ENCODE measurements at regions of chr6 and their contacts with region 1.

Region 1: DNA sequence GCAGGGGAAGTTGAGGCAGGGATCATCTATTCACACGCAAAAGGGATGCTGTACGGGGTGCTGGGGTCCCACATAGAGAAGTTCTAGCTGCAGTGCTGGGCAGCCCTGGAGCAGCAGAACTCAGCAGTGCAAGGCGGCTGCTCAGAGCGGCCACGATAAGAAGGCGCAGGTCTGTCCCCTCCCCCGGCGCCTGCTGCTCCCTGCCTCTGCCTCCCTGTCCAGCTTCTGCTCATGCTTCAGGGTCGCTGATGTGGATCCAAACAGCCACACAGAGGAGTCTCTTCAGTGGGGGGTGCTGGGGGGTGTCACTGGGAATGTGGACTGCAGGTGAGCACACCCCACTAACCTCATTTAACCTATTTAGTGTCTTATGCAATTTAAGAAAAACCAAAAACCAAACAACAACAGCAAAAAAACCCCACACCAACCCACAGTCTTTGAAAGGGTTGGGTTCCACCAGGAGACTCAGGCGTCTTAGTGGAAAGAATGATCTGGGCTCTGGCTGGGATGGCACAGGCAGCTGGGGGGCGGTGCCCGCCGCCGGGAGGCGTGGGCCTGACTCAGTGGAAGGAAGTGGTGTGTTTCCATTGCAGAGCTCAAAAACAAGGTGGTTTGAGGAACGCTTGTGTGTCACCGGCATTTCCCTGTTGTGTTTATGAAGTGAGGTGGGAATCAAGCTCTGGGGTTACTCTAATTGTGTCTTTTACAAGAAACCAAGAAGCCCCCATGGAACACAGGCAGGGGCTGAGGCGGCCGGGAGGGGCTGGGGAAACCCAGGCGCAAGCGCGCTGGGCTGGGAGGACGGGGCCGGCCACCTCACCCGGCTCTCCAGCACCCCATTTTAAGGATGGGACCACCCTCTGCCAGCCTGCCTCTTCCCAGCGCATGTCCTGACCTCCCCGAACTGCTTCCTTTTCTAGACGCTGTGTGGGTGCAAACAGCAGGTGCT is 55.1 kb downstream of the IRF4 start:
- DNase-seq: peak; percentile 91
- H3K4me3 Mint-ChIP-seq: peak overlapping the region; percentile 60
- H3K27ac Mint-ChIP-seq: peak overlapping the region; percentile 95
- H3K4me1 Mint-ChIP-seq: peaks cover 66% of the 10 kb centered on the region
- H3K27me3 Mint-ChIP-seq: no peaks in the 10 kb centered on the region

Region 2: GRCh38 chr6:436308-437036 is 10.2 kb before region 1 on chr6:
- CTCF ChIA-PET with region 1: interaction called, 19 read pairs
- DNase-seq: no peak
- H3K4me3 Mint-ChIP-seq: no peak overlapping the region
- H3K27ac Mint-ChIP-seq: no peak overlapping the region
- H3K4me1 Mint-ChIP-seq: peaks cover 41% of the 10 kb centered on the region
- H3K27me3 Mint-ChIP-seq: peaks cover 4% of the 10 kb centered on the region